ENCODE measurements at regions of chr1 and their contacts with region 1.

Region 1: DNA sequence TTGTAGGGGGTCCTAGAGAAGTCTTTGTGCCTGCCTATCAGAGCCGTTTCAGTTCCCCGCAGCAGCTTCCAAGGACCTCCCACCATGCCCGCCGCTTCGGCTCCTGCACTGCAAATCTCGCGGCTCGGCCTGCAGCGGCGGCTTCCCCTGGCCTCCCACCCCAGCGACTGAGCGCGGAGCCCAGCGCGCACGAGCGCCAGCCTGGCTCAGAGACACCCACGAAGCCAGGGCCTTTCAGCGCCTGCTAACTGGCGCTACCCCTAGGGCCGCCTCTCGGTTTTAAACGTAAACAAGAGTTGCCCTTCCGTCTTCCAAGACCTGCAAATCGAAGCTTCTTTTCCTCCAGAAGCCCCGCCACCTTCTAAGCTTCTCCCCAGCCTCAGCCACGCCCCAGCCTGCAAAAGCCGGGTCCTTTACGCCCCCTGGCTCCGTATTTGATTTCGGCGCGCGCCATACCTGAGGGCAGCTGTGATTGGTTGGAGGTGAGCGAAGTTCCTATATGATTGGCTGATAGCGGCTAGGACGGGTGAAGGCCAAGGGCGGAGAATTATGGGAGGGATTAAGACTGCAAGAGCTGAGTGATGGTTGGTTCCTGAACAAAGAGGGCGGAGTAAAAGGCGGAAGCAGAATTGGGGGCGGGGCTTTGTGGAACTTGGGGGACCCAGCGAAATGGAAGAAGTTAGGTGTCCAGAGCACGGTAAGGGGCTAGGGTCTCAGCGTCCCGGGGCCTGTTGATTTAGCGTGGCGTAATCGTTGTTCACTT is at the start of gene TTF2:
- DNase-seq: peak; percentile 98
- ATAC-seq: peak; percentile 96
- H3K4me3 ChIP-seq: peak within 1 kb of the TSS; percentile 89
- H3K27ac ChIP-seq: peak within 1 kb of the TSS; percentile 68
- H3K4me1 ChIP-seq: peaks cover 14% of the 10 kb centered on the region
- H3K27me3 ChIP-seq: no peaks in the 10 kb centered on the region
- CTCF ChIP-seq: no peak
- total RNA-seq, gene TTF2: 25.1 and 28.8 TPM in 2 replicates

Region 2: GRCh38 chr1:116724765-116725375 is 335.0 kb before region 1 on chr1:
- CTCF ChIA-PET with region 1: interaction called, 4 read pairs
- POLR2A ChIA-PET with region 1: no interaction called
- intact Hi-C with region 1: loop called (anchors 1 kb)
- DNase-seq: peak; percentile 76
- ATAC-seq: peak; percentile 29; the same call in 1 of the 2 replicates
- H3K4me3 ChIP-seq: no peak overlapping the region
- H3K27ac ChIP-seq: no peak overlapping the region
- H3K4me1 ChIP-seq: no peaks in the 10 kb centered on the region
- H3K27me3 ChIP-seq: no peaks in the 10 kb centered on the region
- CTCF ChIP-seq: peak; percentile 89

Region 3: GRCh38 chr1:116737020-116737854 is 322.6 kb before region 1 on chr1:
- CTCF ChIA-PET with region 1: no interaction called
- POLR2A ChIA-PET with region 1: no interaction called
- intact Hi-C with region 1: loop called (anchors 1 kb)
- DNase-seq: peak; percentile 68
- ATAC-seq: peak; percentile 59; the same call in 1 of the 2 replicates
- H3K4me3 ChIP-seq: no peak overlapping the region
- H3K27ac ChIP-seq: no peak overlapping the region
- H3K4me1 ChIP-seq: no peaks in the 10 kb centered on the region
- H3K27me3 ChIP-seq: no peaks in the 10 kb centered on the region
- CTCF ChIP-seq: peak; percentile 89

Region 4: DNA sequence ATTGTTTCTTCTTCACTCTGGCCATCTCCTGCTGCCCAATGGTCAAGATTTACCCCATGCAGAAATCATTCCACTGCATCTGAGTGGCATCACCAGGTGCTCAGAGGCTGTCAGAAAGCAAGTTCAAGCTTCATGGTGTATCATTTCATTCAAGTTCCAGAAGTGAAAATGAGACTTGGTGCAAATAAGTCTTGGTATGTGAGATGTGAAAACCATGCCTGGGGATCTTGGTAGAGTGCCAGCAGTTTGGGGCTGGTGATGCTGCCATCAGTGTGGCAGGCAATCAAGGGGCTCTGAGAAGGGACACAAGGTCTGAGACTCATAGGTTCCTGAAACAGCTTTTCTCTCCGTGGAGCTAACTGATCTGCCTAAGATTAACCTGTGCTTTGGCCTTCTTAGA is 253.6 kb before region 1 on chr1:
- CTCF ChIA-PET with region 1: interaction called, 11 read pairs
- POLR2A ChIA-PET with region 1: no interaction called
- intact Hi-C with region 1: no loop called
- DNase-seq: no peak
- ATAC-seq: no peak
- H3K4me3 ChIP-seq: no peak overlapping the region
- H3K27ac ChIP-seq: no peak overlapping the region
- H3K4me1 ChIP-seq: no peaks in the 10 kb centered on the region
- H3K27me3 ChIP-seq: peaks cover 6% of the 10 kb centered on the region
- CTCF ChIP-seq: no peak

Region 5: DNA sequence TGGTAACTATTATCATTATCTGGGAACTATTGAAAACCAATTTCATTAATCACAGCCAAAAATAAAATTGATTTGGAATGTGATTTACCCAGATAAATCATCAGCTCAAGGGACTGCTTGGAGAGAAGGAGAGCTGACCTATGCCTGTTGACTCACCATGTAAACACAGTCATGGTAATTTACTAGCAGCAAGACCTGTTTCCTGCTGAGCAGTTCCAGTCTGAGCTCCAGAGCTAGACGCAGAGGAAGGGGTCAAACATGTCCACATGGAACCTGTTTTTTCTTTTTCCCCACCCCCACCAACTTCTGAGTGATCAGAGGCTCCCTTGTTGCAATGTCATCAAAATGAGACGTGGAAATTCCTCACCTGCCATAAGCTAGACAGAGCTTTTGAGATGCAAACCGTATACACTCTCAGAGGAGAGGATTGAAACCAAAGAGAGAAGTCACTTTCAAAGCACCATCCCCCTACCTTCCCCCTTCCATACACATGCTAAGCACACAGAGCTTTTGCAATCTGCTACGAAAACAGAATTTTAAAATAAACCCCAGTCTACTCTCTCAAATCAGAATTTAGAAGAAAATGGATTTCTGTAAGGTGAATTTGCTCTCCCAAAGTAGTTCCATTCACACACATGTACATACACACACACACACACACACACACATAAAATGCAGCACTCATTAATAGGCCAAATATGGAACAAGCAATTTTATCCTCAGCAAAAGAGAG is 206.0 kb before region 1 on chr1:
- CTCF ChIA-PET with region 1: no interaction called
- POLR2A ChIA-PET with region 1: no interaction called
- intact Hi-C with region 1: loop called (anchors 1 kb)
- DNase-seq: peak; percentile 97
- ATAC-seq: peak; percentile 99
- H3K4me3 ChIP-seq: peak overlapping the region; percentile 49
- H3K27ac ChIP-seq: peak overlapping the region; percentile 80
- H3K4me1 ChIP-seq: peaks cover 44% of the 10 kb centered on the region
- H3K27me3 ChIP-seq: no peaks in the 10 kb centered on the region
- CTCF ChIP-seq: no peak

Region 6: DNA sequence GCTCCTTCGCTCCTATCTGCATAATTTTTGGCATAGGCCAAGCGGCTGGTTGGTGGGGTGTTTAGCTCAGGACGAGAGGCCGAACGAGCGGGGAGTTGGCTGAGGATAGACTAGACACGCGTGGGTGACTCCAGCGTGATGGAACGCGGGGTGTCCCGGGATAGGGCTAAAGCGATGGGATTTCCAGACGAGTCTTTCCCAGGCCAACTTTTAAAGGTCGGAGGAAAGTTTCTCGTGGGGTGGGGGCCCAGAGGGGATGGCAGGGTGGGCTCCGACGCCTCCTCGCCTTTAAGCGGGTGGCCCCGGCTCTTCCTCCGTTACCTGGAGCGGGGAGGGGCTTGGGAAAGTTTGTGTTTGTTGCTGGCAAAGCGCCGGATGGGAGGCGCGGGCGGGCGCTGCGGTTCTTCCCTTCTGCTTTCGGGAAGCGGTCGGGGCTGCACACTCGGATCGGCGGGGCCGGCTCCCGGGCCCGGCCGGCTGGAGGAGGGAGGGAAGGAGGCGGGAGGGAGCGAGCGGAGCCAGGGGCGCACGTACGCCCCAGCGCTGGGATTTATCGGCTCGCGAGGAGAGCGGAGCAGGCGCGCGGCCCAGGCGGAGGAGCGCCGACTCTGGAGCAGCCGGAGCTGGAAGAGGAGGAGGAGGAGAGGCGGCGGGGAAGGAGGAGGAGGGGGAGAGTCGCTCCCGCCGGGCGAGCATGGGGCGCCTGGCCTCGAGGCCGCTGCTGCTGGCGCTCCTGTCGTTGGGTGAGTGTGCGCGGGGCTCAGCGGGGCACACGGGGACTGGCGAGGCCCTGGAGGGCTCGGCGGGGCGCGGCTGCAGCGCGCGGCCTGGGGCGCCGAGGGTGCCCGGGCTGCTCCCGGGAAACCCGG is 150.1 kb before region 1 on chr1 and contains the start of gene PTGFRN:
- CTCF ChIA-PET with region 1: no interaction called
- POLR2A ChIA-PET with region 1: no interaction called
- intact Hi-C with region 1: loop called (anchors 2 kb)
- DNase-seq: peak; percentile 71
- ATAC-seq: peak; percentile 48
- H3K4me3 ChIP-seq: peak within 1 kb of the TSS; percentile 85
- H3K27ac ChIP-seq: peak within 1 kb of the TSS; percentile 36
- H3K4me1 ChIP-seq: peaks cover 60% of the 10 kb centered on the region
- H3K27me3 ChIP-seq: no peaks in the 10 kb centered on the region
- CTCF ChIP-seq: no peak
- total RNA-seq, gene PTGFRN: 57.4 and 77.8 TPM in 2 replicates

Region 7: DNA sequence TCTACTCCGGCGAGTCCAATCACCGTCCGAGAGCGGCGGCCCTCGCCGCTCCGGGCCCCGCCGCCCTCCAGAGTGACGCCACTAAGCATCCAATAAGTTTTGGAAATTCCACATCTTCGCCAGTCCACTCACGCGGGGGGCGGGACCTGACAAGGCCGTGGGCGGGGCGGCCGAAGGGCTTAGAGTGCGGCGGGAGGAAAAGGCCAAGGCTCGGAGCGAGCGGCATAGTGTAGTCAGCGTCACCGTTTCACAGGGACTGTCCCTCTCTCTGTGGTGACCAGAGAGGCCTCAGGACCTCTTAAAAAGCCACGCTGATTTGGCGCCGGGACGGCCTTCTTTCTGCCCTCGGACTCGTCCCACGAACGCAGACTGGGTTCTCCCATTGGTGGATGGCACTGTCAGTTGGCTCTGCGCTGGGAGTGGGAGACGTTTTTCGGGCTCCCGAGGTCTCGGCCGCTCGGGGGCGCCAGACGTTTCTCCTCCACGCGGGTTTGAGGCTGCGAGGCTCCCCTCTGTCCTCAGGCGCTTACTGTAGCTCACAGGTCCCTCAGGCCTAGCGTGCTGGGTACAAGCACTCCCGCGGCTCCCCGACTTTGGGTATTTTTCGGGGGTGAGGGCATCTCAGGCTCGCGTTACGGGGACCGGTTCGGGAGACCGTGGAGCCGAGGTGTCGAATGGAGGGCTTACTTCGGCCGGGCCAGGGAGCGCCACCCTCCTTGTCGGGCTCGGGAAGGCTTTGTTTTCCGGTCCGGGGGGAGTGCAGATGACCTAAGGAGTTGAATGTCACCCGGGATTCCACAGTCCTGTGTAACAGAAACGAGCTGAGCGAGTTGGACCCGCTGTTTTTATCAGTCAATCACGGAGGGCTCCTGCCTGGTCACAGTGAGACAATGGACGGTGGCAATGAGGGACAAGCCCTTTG is 62.2 kb after region 1 on chr1:
- CTCF ChIA-PET with region 1: interaction called, 4 read pairs
- POLR2A ChIA-PET with region 1: no interaction called
- intact Hi-C with region 1: loop called (anchors 2 kb)
- DNase-seq: peak; percentile 97
- ATAC-seq: peak; percentile 97
- H3K4me3 ChIP-seq: peak overlapping the region; percentile 71
- H3K27ac ChIP-seq: peak overlapping the region; percentile 58
- H3K4me1 ChIP-seq: peaks cover 15% of the 10 kb centered on the region
- H3K27me3 ChIP-seq: no peaks in the 10 kb centered on the region
- CTCF ChIP-seq: peak; percentile 89

Measured in PC-3 (cell line).